Heart left ventricle (tissue), 16 donors: ENCODE measurements at regions of chr7 and their contacts with region 1.

Region 1: GRCh38 chr7:16071246-16071857 is 350.0 kb downstream of the CRPPA start:
- DNase-seq: peak in 1 of 5 donors; percentile 27
- ATAC-seq: peak in 3 of 4 donors; percentile 54 to 67 (median 55)
- H3K4me3 ChIP-seq: peak overlapping the region in 7 of 12 donors; percentile 9 to 31 (median 13)
- H3K27ac ChIP-seq: peak overlapping the region in 5 of 12 donors; percentile 7 to 85 (median 80)
- H3K4me1 ChIP-seq: peaks cover 0 to 26% (median 15%) of the 10 kb centered on the region in 12 donors
- H3K27me3 ChIP-seq: no peaks in the 10 kb centered on the region
- CTCF ChIP-seq: peak; percentile 72 to 93 (median 85)
- POLR2A ChIP-seq: no peak

Region 2: DNA sequence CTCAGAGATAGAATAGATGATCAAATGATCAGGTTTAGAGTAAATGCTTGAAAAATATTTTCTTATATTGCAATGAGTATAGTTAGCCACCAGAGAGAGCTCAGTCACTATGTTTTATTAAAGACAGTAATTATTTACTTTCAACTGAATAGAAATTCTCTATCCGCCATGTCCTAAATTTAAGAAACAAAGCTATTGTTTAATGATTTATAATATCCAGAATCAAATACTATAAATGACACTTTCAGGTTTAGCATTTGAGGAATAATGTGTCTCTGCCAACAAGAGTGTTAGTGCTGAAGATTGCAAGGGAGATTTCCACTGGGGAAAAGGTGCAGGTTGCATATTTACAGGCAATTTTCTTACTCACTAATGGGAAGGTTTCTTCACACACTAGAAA is 1353.5 kb before region 1 on chr7:
- intact Hi-C with region 1: loop called in 2 of 10 experiments (anchors 5 to 10 kb)
- DNase-seq: no peak
- ATAC-seq: peak in 1 of 4 donors; percentile 62
- H3K4me3 ChIP-seq: no peak overlapping the region
- H3K27ac ChIP-seq: no peak overlapping the region
- H3K4me1 ChIP-seq: no peaks in the 10 kb centered on the region
- H3K27me3 ChIP-seq: no peaks in the 10 kb centered on the region
- CTCF ChIP-seq: peak; percentile 36 to 77 (median 64)
- POLR2A ChIP-seq: no peak

Region 3: GRCh38 chr7:15209429-15209828 is 861.9 kb before region 1 on chr7:
- intact Hi-C with region 1: loop called in 1 of 10 experiments (anchors 10 kb)
- DNase-seq: no peak
- ATAC-seq: no peak
- H3K4me3 ChIP-seq: no peak overlapping the region
- H3K27ac ChIP-seq: no peak overlapping the region
- H3K4me1 ChIP-seq: no peaks in the 10 kb centered on the region
- H3K27me3 ChIP-seq: no peaks in the 10 kb centered on the region
- CTCF ChIP-seq: no peak
- POLR2A ChIP-seq: no peak

Region 4: GRCh38 chr7:15326044-15326644 is 745.2 kb before region 1 on chr7:
- intact Hi-C with region 1: loop called in 8 of 10 experiments (anchors 2 to 10 kb)
- DNase-seq: no peak
- ATAC-seq: no peak
- H3K4me3 ChIP-seq: no peak overlapping the region
- H3K27ac ChIP-seq: no peak overlapping the region
- H3K4me1 ChIP-seq: peaks cover 0 to 4% (median 0%) of the 10 kb centered on the region in 12 donors
- H3K27me3 ChIP-seq: no peaks in the 10 kb centered on the region
- CTCF ChIP-seq: peak; percentile 35 to 76 (median 62)
- POLR2A ChIP-seq: no peak

Region 5: GRCh38 chr7:15561835-15562234 is 509.5 kb before region 1 on chr7 and contains the start of gene AGMO:
- intact Hi-C with region 1: loop called in 8 of 10 experiments (anchors 5 to 10 kb)
- DNase-seq: peak; percentile 69 to 79 (median 75)
- ATAC-seq: peak; percentile 61 to 87 (median 84)
- H3K4me3 ChIP-seq: peak within 1 kb of the TSS in 10 of 12 donors; percentile 3 to 51 (median 40)
- H3K27ac ChIP-seq: peak within 1 kb of the TSS; percentile 51 to 80 (median 70)
- H3K4me1 ChIP-seq: peaks cover 0 to 35% (median 1%) of the 10 kb centered on the region in 12 donors
- H3K27me3 ChIP-seq: no peaks in the 10 kb centered on the region
- CTCF ChIP-seq: peak in 6 of 12 donors; percentile 7 to 39 (median 16)
- POLR2A ChIP-seq: no peak
- total RNA-seq, gene AGMO: 0.21 to 0.66 (median 0.40) TPM in 8 of 9 donors, not detected in the other

Region 6: GRCh38 chr7:15720849-15721471 is 350.4 kb before region 1 on chr7:
- intact Hi-C with region 1: loop called in 4 of 10 experiments (anchors 5 to 10 kb)
- DNase-seq: peak in 3 of 5 donors; percentile 24 to 33 (median 26)
- ATAC-seq: no peak
- H3K4me3 ChIP-seq: no peak overlapping the region
- H3K27ac ChIP-seq: peak overlapping the region in 1 of 12 donors; percentile 17
- H3K4me1 ChIP-seq: peaks cover 0 to 16% (median 6%) of the 10 kb centered on the region in 12 donors
- H3K27me3 ChIP-seq: no peaks in the 10 kb centered on the region
- CTCF ChIP-seq: peak; percentile 52 to 86 (median 74)
- POLR2A ChIP-seq: no peak

Region 7: GRCh38 chr7:15967551-15967950 is 103.8 kb before region 1 on chr7:
- intact Hi-C with region 1: loop called in 1 of 10 experiments (anchors 5 kb)
- DNase-seq: no peak
- ATAC-seq: no peak
- H3K4me3 ChIP-seq: no peak overlapping the region
- H3K27ac ChIP-seq: no peak overlapping the region
- H3K4me1 ChIP-seq: peaks cover 0 to 4% (median 0%) of the 10 kb centered on the region in 12 donors
- H3K27me3 ChIP-seq: no peaks in the 10 kb centered on the region
- CTCF ChIP-seq: no peak
- POLR2A ChIP-seq: no peak